ENCODE measurements at regions of chr1 and their contacts with region 1.

Region 1: DNA sequence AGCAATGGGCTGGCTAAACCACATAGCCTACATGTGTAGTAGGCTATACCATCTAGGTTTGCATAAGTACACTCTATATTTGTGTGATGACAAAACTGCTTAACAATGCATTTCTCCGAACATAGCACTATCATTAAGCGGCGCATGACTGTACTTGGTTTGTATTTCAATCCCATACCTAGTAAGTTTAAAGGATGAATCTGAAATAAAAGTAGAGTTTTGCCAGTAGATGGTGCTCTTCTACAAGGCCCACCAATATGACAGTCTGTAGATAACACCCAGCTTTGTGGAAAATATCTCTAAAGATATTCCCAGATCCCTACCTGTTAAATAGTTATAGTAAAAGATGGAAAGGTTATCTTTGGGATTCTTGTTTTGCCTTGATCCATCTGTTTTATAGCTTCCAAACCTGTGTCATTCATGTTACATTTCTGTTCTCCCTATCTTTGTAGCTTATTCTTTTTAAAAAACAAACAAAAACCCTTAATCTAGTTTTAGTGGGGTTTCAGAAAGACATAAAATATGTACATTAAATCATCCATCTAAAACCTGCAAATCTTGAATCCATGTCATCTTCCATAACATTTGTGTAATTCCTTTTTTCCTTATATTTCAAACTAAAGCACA is 33.9 kb upstream of the ASPM start:
- DNase-seq: peak; percentile 52
- H3K4me3 ChIP-seq: no peak overlapping the region
- H3K27ac ChIP-seq: no peak overlapping the region
- H3K4me1 ChIP-seq: peaks cover 25% of the 10 kb centered on the region
- CTCF ChIP-seq: peak; percentile 93

Region 2: DNA sequence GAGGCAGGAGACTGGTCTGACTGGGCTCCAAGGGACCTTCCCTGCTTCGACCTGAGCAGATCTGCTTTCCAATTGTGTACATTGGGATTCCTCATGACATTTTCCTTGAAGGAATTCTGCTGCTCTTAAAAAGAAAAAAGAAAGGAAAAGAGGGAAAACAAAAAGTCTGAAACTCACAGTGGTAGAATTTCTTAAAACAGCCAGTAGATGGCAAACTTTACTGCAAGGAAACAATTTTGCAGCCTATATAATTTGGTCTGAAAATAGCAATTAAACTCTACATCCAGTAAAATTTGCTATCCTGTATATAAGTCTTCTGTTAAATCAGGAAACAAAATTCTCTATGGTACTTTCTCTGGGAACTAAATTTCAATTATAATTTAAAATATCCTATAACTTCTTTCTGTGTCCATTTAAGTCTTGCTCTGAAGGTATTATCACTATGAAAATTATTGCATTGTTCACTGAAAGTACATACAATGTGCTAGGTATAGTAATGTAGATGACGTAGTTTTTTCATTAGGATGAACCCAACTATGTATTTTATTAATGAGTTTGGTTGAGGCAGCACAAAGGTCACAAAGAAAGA is 147.5 kb after region 1 on chr1:
- CTCF ChIA-PET with region 1: no interaction called
- POLR2A ChIA-PET with region 1: no interaction called
- intact Hi-C with region 1: loop called (anchors 5 kb)
- DNase-seq: peak; percentile 3
- H3K4me3 ChIP-seq: no peak overlapping the region
- H3K27ac ChIP-seq: no peak overlapping the region
- H3K4me1 ChIP-seq: no peaks in the 10 kb centered on the region
- CTCF ChIP-seq: peak; percentile 85

Region 3: DNA sequence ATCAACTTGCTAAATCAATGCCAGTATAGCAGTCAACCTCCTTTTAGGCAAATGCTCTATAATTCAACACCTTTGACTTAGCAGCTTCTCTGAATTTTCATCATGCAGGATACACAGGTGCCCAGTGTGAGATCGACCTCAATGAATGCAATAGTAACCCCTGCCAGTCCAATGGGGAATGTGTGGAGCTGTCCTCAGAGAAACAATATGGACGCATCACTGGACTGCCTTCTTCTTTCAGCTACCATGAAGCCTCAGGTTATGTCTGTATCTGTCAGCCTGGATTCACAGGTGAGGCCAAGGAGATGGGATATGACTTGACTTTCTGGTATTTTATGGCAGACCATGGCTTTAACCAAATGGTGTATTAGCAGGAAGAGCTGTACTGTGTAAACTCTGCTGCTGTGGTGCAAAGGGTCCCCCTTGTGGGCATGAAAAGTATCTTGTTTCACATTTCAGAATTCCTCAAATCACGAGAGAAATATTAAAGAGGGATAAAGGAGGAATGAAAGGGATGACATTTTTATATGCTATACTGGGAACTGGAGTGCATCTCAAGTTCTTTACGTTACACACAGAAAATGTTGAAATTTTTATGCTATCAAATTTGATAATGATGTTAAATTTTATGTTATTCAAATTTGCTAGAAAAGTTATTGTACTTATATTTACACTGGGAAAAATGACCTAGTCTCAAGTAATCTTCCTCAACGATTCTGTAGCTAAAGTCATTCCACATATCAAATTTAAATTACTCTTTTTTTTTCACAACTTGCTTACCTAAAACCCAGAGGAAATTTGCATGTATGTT is 176.6 kb after region 1 on chr1:
- CTCF ChIA-PET with region 1: interaction called, 8 read pairs
- POLR2A ChIA-PET with region 1: interaction called, 7 read pairs
- intact Hi-C with region 1: loop called (anchors 1 kb)
- DNase-seq: peak; percentile 51
- H3K4me3 ChIP-seq: no peak overlapping the region
- H3K27ac ChIP-seq: no peak overlapping the region
- H3K4me1 ChIP-seq: no peaks in the 10 kb centered on the region
- CTCF ChIP-seq: peak; percentile 83

Measured in OCI-LY7 (cell line).